Adrenal gland (tissue), 19 donors: ENCODE measurements at regions of chr15 and their contacts with region 1.

Region 1: DNA sequence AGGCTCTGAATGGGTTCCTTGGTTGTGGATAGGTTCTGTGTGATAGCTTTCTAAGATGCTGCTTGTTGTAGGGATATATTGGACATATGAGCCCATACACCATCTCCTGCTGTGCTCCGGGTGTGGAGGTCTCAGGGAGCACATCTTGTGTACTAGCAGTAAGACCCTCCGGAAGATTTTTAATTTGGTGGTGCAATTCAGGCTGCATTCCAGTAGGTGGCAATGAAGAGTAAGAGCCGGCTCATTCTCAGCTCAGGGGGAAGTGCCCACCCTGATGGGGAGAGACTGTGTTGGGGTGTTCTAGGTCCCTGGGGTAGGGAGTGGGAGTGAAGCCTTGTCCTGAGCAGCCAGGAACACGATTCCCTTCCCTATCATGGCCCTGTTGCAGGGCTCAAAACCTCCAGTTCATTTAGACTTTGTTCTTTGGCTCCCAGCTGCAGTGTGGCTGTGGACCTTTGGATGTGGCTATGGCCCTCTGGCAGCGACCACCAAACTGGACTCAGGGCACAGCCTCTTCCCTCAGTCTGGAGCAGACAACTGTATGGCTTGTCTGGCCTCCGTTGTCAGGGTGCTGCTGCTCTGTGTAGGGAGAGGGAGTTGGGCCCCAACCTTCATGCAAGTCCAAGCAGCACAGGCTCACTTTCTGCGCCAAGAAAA is 104.7 kb downstream of the UNC13C start:
- DNase-seq: peak in 1 of 7 donors; percentile 14
- H3K4me3 ChIP-seq: no peak overlapping the region
- H3K27ac ChIP-seq: no peak overlapping the region
- H3K4me1 ChIP-seq: no peaks in the 10 kb centered on the region
- H3K27me3 ChIP-seq: peaks cover 9% of the 10 kb centered on the region
- CTCF ChIP-seq: peak; percentile 42 to 65 (median 56)
- POLR2A ChIP-seq: no peak

Region 2: DNA sequence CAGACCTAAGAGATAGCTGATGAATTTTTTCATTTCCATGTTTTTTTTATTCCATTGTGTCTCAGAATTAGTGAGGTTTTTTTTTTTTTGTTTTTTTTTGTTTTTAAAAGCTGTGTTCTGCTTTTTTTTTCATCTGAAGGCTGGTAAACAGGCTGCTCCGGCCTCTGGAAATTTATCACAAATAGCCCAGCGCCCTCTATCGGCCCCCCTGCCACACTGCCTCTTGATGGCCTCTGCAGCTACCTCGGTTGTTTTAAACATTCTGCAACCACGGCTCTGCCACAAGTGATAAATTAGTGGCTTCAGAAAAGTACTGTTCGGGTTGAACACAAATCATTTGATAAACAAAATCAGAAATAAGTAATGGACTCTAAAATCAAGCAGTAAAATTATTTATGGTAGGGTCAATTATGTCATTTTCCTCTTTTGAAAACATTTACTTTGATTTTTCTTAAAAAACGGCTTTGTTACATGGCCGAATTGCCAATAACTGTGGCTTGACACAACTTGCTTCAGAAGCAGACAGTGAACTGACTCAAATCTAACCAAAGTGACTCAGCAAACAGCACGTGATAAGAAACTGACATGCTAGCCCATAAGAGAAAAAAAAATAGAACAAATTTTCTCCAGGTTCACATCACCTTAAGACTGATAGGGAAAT is 1026.0 kb after region 1 on chr15:
- intact Hi-C with region 1: loop called in 1 of 2 experiments (anchors 10 kb)
- DNase-seq: peak; percentile 58 to 87 (median 80)
- H3K4me3 ChIP-seq: no peak overlapping the region
- H3K27ac ChIP-seq: no peak overlapping the region
- H3K4me1 ChIP-seq: peaks cover 0 to 6% of the 10 kb centered on the region in 2 donors
- H3K27me3 ChIP-seq: no peaks in the 10 kb centered on the region
- CTCF ChIP-seq: peak; percentile 36 to 65 (median 52)
- POLR2A ChIP-seq: no peak